ENCODE measurements at regions of chr9 and their contacts with region 1.

Region 1: DNA sequence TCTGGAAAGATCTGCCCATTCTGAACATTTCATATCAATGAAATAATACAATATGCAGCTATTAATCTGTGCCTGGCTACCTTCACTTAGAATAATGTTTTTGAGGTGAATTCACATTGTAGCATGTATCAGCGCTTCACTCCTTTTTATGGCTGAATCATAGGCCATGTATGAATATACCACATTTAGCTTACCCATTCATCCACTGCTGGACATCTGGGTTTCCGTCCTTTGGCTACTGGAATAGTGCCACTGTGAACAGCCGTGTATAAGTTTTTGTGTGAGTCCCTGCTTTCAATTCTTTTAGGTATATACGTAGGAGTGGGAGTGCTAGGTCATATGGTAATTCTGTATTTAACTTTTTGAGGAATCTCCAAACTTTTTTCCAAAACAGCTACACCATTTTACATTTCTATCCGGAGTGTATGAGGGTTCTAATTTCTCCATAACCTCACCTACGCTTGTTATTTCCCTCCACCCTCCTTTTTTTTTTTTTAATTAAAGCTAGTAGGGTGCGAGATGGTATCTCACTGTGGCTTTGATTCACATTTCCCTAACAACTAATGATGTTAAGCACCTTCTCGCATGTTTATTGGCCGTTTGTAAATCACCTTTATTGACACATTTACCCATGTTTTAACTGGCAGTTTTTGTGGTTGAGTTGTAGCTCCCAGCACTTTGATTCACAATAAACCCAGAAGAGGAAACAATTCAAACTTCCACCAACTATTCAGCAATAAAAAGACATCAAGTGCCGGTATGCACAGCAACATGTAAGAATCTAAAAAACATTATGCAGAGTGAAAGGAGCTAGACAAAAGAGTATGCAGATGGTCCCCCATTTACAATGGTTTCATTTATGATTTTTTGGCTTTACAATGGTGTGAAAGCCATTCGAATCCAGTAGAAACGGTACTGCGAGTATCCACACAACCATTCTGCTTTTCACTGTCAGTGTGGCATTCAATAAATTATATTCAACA is 8.1 kb downstream of the SEMA4D start:
- DNase-seq: peak in 2 of 9 experiments; percentile 85 to 92
- ATAC-seq: peak; percentile 85
- H3K4me3 ChIP-seq: peak overlapping the region in 1 of 2 experiments; percentile 9
- H3K4me3 Mint-ChIP-seq: peak overlapping the region; percentile 72
- H3K27ac ChIP-seq: peak overlapping the region; percentile 1 to 73
- H3K27ac Mint-ChIP-seq: peak overlapping the region; percentile 92
- H3K4me1 ChIP-seq: peaks cover 91% of the 10 kb centered on the region
- H3K4me1 Mint-ChIP-seq: peaks cover 93% of the 10 kb centered on the region
- H3K27me3 ChIP-seq: no peaks in the 10 kb centered on the region
- H3K27me3 Mint-ChIP-seq: no peaks in the 10 kb centered on the region
- CTCF ChIP-seq: no peak

Region 2: GRCh38 chr9:89477811-89478630 is 11.8 kb before region 1 on chr9:
- CTCF ChIA-PET with region 1: interaction called, 4 read pairs
- POLR2A ChIA-PET with region 1: interaction called, 9 read pairs
- intact Hi-C with region 1: loop called in 1 of 2 experiments (anchors 1 kb)
- DNase-seq: peak in 6 of 9 experiments; percentile 36 to 72 (median 66)
- ATAC-seq: peak; percentile 35
- H3K4me3 ChIP-seq: peak overlapping the region; percentile 44 to 50
- H3K4me3 Mint-ChIP-seq: peak overlapping the region; percentile 91
- H3K27ac ChIP-seq: peak overlapping the region; percentile 26 to 65
- H3K27ac Mint-ChIP-seq: peak overlapping the region; percentile 99
- H3K4me1 ChIP-seq: peaks cover 82% of the 10 kb centered on the region
- H3K4me1 Mint-ChIP-seq: peaks cover 90% of the 10 kb centered on the region
- H3K27me3 ChIP-seq: no peaks in the 10 kb centered on the region
- H3K27me3 Mint-ChIP-seq: no peaks in the 10 kb centered on the region
- CTCF ChIP-seq: no peak

Region 3: GRCh38 chr9:89536145-89536574 is 46.3 kb after region 1 on chr9:
- CTCF ChIA-PET with region 1: interaction called, 3 read pairs
- POLR2A ChIA-PET with region 1: interaction called, 9 read pairs
- intact Hi-C with region 1: loop called in 1 of 2 experiments (anchors 2 kb)
- DNase-seq: peak in 2 of 9 experiments; percentile 73 to 88
- ATAC-seq: peak; percentile 83
- H3K4me3 ChIP-seq: peak overlapping the region; percentile 9 to 13
- H3K4me3 Mint-ChIP-seq: peak overlapping the region; percentile 73
- H3K27ac ChIP-seq: peak overlapping the region; percentile 29 to 79
- H3K27ac Mint-ChIP-seq: peak overlapping the region; percentile 94
- H3K4me1 ChIP-seq: peaks cover 96% of the 10 kb centered on the region
- H3K4me1 Mint-ChIP-seq: peaks cover 94% of the 10 kb centered on the region
- H3K27me3 ChIP-seq: no peaks in the 10 kb centered on the region
- H3K27me3 Mint-ChIP-seq: no peaks in the 10 kb centered on the region
- CTCF ChIP-seq: no peak

Measured in CD8-positive, alpha-beta T cell (primary cell).